ENCODE measurements at regions of chr5 and their contacts with region 1.

Region 1: GRCh38 chr5:129767906-129768380 is 20.0 kb downstream of the MINAR2 start:
- DNase-seq: no peak
- H3K4me3 ChIP-seq: no peak overlapping the region
- H3K27ac ChIP-seq: no peak overlapping the region
- H3K4me1 ChIP-seq: no peaks in the 10 kb centered on the region
- H3K27me3 ChIP-seq: peaks cover 0 to 2% (median 0%) of the 10 kb centered on the region in 7 donors
- CTCF ChIP-seq: peak; percentile 60 to 92 (median 84)
- POLR2A ChIP-seq: no peak

Region 2: DNA sequence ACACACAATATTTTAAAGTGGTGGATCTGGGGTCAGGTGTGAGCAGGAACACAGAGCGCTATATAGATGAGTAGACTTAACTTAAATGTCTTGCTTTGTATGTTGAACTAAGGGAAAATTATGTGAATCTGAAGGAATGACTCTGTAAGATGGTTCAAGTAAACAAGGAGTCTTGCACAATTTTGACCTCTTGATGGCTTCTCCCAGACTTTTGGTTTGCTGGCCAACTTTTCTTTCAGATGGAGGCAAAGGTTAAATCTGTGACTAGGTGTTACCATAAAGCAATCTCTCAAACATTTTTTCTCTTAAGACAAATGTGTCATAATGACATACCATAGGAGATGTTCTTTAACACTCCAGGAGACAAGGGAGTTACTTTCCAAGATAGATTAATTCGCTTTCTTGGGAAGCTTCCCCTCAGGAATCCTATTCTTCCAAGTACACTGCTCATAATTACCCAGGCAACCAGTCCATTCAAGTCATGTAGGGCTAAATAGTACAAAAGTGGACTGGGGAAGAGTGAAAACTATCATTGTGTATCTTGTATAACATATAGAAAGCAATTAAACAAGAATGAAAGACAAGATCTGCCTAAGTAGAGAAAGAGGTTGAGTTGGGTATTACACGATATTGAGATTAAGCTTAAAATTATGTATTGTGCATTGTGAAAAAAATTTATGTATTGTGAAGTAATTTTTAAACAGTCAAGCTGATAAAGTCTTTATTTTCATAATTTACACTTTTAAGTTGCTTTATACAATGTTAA is 863.0 kb before region 1 on chr5:
- intact Hi-C with region 1: loop called (anchors 5 kb)
- DNase-seq: no peak
- H3K4me3 ChIP-seq: no peak overlapping the region
- H3K27ac ChIP-seq: no peak overlapping the region
- H3K4me1 ChIP-seq: no peaks in the 10 kb centered on the region
- H3K27me3 ChIP-seq: no peaks in the 10 kb centered on the region
- CTCF ChIP-seq: no peak
- POLR2A ChIP-seq: no peak

Region 3: GRCh38 chr5:129474544-129474943 is 293.4 kb before region 1 on chr5:
- intact Hi-C with region 1: no loop called
- DNase-seq: no peak
- H3K4me3 ChIP-seq: no peak overlapping the region
- H3K27ac ChIP-seq: no peak overlapping the region
- H3K4me1 ChIP-seq: no peaks in the 10 kb centered on the region
- H3K27me3 ChIP-seq: no peaks in the 10 kb centered on the region
- CTCF ChIP-seq: no peak
- POLR2A ChIP-seq: no peak

Region 4: DNA sequence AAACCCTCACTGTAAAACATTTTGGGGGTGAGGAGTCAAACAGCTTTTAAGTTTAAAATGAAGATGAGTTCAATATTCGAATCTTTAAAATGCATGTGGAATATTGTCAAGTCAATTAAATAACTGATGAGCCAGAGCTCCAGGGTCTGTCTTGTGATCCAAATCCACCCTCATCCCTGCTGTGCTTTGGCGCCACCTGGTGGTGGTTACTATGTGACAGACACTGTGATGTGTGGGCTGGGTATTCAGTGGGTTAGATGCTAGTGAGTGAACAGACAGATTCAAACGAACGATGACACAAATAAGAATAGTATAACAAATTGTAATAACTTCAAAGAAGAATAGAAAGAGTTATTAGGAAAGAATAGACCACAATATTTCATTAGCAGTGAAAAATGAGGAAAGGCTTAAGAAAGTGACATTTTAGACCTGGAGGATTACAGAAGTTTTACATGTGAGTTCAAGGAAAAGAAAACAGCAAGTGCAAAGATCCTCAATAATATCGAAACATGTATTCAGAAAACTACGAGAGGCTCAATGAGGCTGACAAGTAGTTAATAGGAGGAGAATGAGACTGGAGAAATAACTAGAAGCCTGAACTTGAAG is 84.9 kb after region 1 on chr5:
- intact Hi-C with region 1: loop called (anchors 5 kb)
- DNase-seq: peak; percentile 89
- H3K4me3 ChIP-seq: no peak overlapping the region
- H3K27ac ChIP-seq: no peak overlapping the region
- H3K4me1 ChIP-seq: peaks cover 0 to 13% (median 6%) of the 10 kb centered on the region in 6 donors
- H3K27me3 ChIP-seq: no peaks in the 10 kb centered on the region
- CTCF ChIP-seq: peak in 10 of 11 experiments; percentile 22 to 82 (median 72)
- POLR2A ChIP-seq: no peak

Region 5: GRCh38 chr5:130333089-130333488 is 565.1 kb after region 1 on chr5:
- intact Hi-C with region 1: no loop called
- DNase-seq: no peak
- H3K4me3 ChIP-seq: no peak overlapping the region
- H3K27ac ChIP-seq: no peak overlapping the region
- H3K4me1 ChIP-seq: no peaks in the 10 kb centered on the region
- H3K27me3 ChIP-seq: no peaks in the 10 kb centered on the region
- CTCF ChIP-seq: no peak
- POLR2A ChIP-seq: no peak